ENCODE measurements at regions of chr18 and their contacts with region 1.

Region 1: DNA sequence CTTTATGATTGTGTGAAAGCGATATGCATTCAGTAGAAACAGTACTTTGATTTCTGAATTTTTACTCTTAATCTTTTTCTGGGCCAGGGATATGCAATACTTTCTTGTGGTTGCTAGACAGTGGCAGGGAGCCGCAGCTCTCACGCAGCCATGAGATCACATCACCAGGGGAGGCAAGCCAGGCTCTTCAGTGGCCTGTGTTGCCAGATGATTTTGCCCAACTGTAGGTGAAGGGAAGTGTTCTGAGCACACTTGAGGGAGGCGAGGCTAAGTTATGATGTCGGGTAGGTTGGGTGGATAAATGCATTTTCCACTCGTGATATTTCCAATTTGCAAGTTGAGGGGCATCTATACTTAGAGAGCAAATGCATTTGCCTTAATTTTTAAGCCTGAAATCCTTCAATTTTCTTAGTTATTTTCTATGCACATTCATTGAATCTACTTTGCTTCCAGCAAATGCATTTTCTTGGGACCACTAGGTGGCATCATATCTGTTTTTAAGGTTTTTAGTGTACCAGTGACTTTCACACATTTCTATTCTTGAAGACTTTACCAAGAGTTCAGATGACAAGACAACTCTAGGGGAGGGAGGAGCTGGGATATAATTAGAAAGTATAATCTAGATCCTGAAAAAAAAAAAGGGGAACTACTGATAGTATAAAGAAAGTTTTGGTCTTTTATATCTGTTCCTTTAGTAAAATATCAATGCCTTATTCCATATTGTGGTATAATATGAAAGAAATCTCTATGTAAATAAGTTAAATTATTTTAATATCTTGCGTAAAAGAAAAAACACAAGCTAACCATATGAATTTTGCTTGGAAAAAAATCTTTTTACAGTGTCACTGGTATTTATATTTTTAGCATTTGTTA is 643.3 kb downstream of the SOCS6 start:
- DNase-seq: peak in 2 of 9 experiments; percentile 7 to 22
- ATAC-seq: peak; percentile 42
- H3K4me3 ChIP-seq: no peak overlapping the region
- H3K4me3 Mint-ChIP-seq: no peak overlapping the region
- H3K27ac ChIP-seq: no peak overlapping the region
- H3K27ac Mint-ChIP-seq: peak overlapping the region; percentile 4
- H3K4me1 ChIP-seq: peaks cover 4% of the 10 kb centered on the region
- H3K4me1 Mint-ChIP-seq: peaks cover 8% of the 10 kb centered on the region
- H3K27me3 ChIP-seq: no peaks in the 10 kb centered on the region
- H3K27me3 Mint-ChIP-seq: no peaks in the 10 kb centered on the region
- CTCF ChIP-seq: peak; percentile 42

Region 2: GRCh38 chr18:70384181-70384790 is 547.9 kb before region 1 on chr18:
- CTCF ChIA-PET with region 1: no interaction called
- POLR2A ChIA-PET with region 1: no interaction called
- intact Hi-C with region 1: no loop called
- DNase-seq: no peak
- ATAC-seq: no peak
- H3K4me3 ChIP-seq: no peak overlapping the region
- H3K4me3 Mint-ChIP-seq: no peak overlapping the region
- H3K27ac ChIP-seq: no peak overlapping the region
- H3K27ac Mint-ChIP-seq: no peak overlapping the region
- H3K4me1 ChIP-seq: no peaks in the 10 kb centered on the region
- H3K4me1 Mint-ChIP-seq: peaks cover 2% of the 10 kb centered on the region
- H3K27me3 ChIP-seq: no peaks in the 10 kb centered on the region
- H3K27me3 Mint-ChIP-seq: peaks cover 3% of the 10 kb centered on the region
- CTCF ChIP-seq: no peak

Region 3: DNA sequence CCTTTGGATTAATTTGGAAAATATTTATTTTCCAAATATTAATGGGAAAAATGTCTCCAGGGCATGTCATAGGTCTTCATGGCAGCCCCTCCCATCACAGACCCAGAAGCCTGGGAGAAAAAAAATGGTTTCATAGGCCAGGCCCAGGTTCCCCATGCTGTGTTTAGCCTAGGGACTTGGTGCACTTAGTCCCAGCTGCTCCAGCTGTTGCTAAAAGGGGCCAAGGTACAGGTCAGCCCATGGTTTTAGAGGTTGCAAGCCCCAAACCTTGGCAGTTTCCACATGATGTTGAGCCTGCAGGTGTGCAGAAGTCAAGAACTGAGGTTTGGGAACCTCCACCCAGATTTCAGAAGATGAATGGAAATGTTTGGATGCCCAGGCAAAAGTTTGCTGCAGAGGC is 333.8 kb before region 1 on chr18:
- CTCF ChIA-PET with region 1: no interaction called
- POLR2A ChIA-PET with region 1: no interaction called
- intact Hi-C with region 1: loop called in 1 of 2 experiments (anchors 2 kb)
- DNase-seq: no peak
- ATAC-seq: no peak
- H3K4me3 ChIP-seq: no peak overlapping the region
- H3K4me3 Mint-ChIP-seq: no peak overlapping the region
- H3K27ac ChIP-seq: no peak overlapping the region
- H3K27ac Mint-ChIP-seq: no peak overlapping the region
- H3K4me1 ChIP-seq: peaks cover 8% of the 10 kb centered on the region
- H3K4me1 Mint-ChIP-seq: peaks cover 11% of the 10 kb centered on the region
- H3K27me3 ChIP-seq: no peaks in the 10 kb centered on the region
- H3K27me3 Mint-ChIP-seq: no peaks in the 10 kb centered on the region
- CTCF ChIP-seq: no peak

Region 4: GRCh38 chr18:71784777-71785176 is 852.6 kb after region 1 on chr18:
- CTCF ChIA-PET with region 1: no interaction called
- POLR2A ChIA-PET with region 1: no interaction called
- intact Hi-C with region 1: loop called in 1 of 2 experiments (anchors 10 kb)
- DNase-seq: peak in 2 of 9 experiments; percentile 4 to 15
- ATAC-seq: no peak
- H3K4me3 ChIP-seq: no peak overlapping the region
- H3K4me3 Mint-ChIP-seq: no peak overlapping the region
- H3K27ac ChIP-seq: no peak overlapping the region
- H3K27ac Mint-ChIP-seq: no peak overlapping the region
- H3K4me1 ChIP-seq: no peaks in the 10 kb centered on the region
- H3K4me1 Mint-ChIP-seq: no peaks in the 10 kb centered on the region
- H3K27me3 ChIP-seq: no peaks in the 10 kb centered on the region
- H3K27me3 Mint-ChIP-seq: no peaks in the 10 kb centered on the region
- CTCF ChIP-seq: no peak

Measured in CD8-positive, alpha-beta T cell (primary cell).